ENCODE measurements at regions of chr13 and their contacts with region 1.

Region 1: GRCh38 chr13:97212601-97213040 is 9.5 kb upstream of the MBNL2 start:
- DNase-seq: peak in 2 of 3 donors; percentile 9 to 26
- H3K4me3 ChIP-seq: no peak overlapping the region
- H3K4me3 Mint-ChIP-seq: peak overlapping the region in 1 of 2 donors; percentile 54
- H3K27ac ChIP-seq: no peak overlapping the region
- H3K27ac Mint-ChIP-seq: peak overlapping the region in 1 of 7 donors; percentile 19
- H3K4me1 ChIP-seq: peaks cover 32 to 47% of the 10 kb centered on the region in 2 donors
- H3K4me1 Mint-ChIP-seq: peaks cover 37% of the 10 kb centered on the region
- H3K27me3 ChIP-seq: peaks cover 38 to 41% of the 10 kb centered on the region in 2 donors
- H3K27me3 Mint-ChIP-seq: peaks cover 38 to 49% (median 39%) of the 10 kb centered on the region in 3 donors
- CTCF ChIP-seq: peak; percentile 54

Region 2: GRCh38 chr13:97004096-97004876 is 208.3 kb before region 1 on chr13:
- intact Hi-C with region 1: loop called in 1 of 2 experiments (anchors 10 kb)
- DNase-seq: peak; percentile 46 to 73 (median 63)
- H3K4me3 ChIP-seq: no peak overlapping the region
- H3K4me3 Mint-ChIP-seq: no peak overlapping the region
- H3K27ac ChIP-seq: no peak overlapping the region
- H3K27ac Mint-ChIP-seq: peak overlapping the region in 2 of 7 donors; percentile 11 to 70
- H3K4me1 ChIP-seq: peaks cover 47 to 53% of the 10 kb centered on the region in 2 donors
- H3K4me1 Mint-ChIP-seq: peaks cover 45% of the 10 kb centered on the region
- H3K27me3 ChIP-seq: no peaks in the 10 kb centered on the region
- H3K27me3 Mint-ChIP-seq: peaks cover 0 to 2% (median 1%) of the 10 kb centered on the region in 3 donors
- CTCF ChIP-seq: no peak

Region 3: DNA sequence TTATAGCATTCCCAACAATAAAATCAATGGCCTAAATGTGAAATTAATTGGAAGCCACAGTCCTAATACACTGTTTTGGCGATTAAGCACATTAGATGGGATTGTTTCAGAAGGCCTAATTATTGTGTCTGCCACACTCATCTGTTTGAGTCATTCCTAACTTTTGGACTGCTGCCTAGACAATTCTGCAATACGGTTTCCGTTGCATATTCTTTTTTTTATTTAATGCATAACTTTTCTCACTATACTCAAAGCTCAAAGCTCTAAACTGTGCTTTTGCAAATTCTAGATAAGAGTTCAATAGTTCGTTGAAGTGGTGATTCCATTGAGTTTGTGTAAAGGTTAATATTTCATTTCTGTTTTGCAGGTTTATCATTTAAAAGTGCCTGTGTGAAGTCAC is 62.6 kb after region 1 on chr13:
- intact Hi-C with region 1: no loop called
- DNase-seq: no peak
- H3K4me3 ChIP-seq: no peak overlapping the region
- H3K4me3 Mint-ChIP-seq: no peak overlapping the region
- H3K27ac ChIP-seq: no peak overlapping the region
- H3K27ac Mint-ChIP-seq: no peak overlapping the region
- H3K4me1 ChIP-seq: no peaks in the 10 kb centered on the region
- H3K4me1 Mint-ChIP-seq: no peaks in the 10 kb centered on the region
- H3K27me3 ChIP-seq: no peaks in the 10 kb centered on the region
- H3K27me3 Mint-ChIP-seq: no peaks in the 10 kb centered on the region
- CTCF ChIP-seq: no peak

Region 4: DNA sequence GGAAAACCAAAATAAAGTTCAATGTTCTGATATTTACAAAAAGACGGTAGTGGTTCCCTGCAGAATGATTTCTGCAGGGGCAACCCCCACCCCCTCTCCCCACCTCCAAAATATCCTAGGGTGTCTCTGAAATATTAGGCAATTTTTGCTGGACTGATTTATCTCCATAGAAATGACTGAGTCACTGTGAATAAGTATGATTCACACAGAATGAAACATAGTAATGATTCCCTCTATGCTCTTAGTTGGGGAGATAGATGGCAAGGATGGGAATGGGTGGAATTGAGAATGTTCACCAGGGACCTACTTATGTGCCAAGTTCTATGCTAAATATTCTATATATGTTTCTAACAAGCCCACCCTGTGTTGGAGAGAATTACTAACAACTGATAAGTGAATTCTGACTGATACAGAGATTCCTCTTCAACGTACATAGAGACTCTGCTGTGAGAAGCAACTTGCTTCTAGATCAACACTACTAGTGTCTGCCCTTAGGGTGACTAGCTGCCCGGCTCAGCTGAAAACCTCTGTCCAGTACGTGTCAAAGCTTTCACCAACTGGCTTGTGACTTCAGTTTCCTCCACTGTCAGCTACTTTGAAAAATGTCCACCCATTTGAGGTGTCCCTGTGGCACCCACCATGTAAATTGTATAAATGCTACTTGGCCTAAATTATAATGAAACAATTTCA is 183.0 kb after region 1 on chr13:
- intact Hi-C with region 1: no loop called
- DNase-seq: no peak
- H3K4me3 ChIP-seq: no peak overlapping the region
- H3K4me3 Mint-ChIP-seq: no peak overlapping the region
- H3K27ac ChIP-seq: no peak overlapping the region
- H3K27ac Mint-ChIP-seq: no peak overlapping the region
- H3K4me1 ChIP-seq: no peaks in the 10 kb centered on the region
- H3K4me1 Mint-ChIP-seq: no peaks in the 10 kb centered on the region
- H3K27me3 ChIP-seq: no peaks in the 10 kb centered on the region
- H3K27me3 Mint-ChIP-seq: peaks cover 0 to 3% (median 0%) of the 10 kb centered on the region in 3 donors
- CTCF ChIP-seq: no peak

Region 5: DNA sequence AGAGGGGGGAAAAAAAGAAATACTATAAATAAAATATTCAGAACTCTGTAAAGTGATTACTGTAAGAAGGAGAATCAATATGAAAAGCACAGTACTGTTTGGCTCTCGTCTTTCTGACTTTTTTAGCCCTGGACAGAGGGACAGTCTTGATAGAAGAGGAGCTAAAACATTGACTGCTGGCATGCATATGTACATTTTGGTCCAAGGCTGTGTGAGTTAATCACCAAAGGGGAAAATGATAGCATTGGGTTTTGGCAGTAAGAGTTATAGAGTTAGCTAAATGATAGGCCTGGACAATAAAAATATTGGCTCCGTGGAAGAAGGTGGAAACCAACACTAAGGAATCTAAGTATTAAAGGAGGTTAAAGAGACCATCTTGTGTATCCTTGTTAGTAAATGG is 271.7 kb after region 1 on chr13:
- intact Hi-C with region 1: no loop called
- DNase-seq: no peak
- H3K4me3 ChIP-seq: no peak overlapping the region
- H3K4me3 Mint-ChIP-seq: no peak overlapping the region
- H3K27ac ChIP-seq: no peak overlapping the region
- H3K27ac Mint-ChIP-seq: no peak overlapping the region
- H3K4me1 ChIP-seq: no peaks in the 10 kb centered on the region
- H3K4me1 Mint-ChIP-seq: no peaks in the 10 kb centered on the region
- H3K27me3 ChIP-seq: no peaks in the 10 kb centered on the region
- H3K27me3 Mint-ChIP-seq: peaks cover 0 to 3% (median 1%) of the 10 kb centered on the region in 3 donors
- CTCF ChIP-seq: no peak